ENCODE measurements at regions of chr7 and their contacts with region 1.

Region 1: GRCh38 chr7:92447345-92448204 is at the start of gene GATAD1:
- ATAC-seq: peak; percentile 92 to 98 (median 97)
- H3K4me3 ChIP-seq: peak within 1 kb of the TSS; percentile 65 to 99 (median 97)
- H3K27ac ChIP-seq: peak within 1 kb of the TSS; percentile 93 to 95
- H3K4me1 ChIP-seq: peaks cover 3 to 10% of the 10 kb centered on the region in 2 donors
- total RNA-seq, gene GATAD1: 20.5 to 44.2 (median 32.8) TPM

Region 2: GRCh38 chr7:92025260-92025659 is 422.3 kb before region 1 on chr7:
- in situ Hi-C with region 1: no loop called
- ATAC-seq: peak in 2 of 8 experiments; percentile 69 to 71
- H3K4me3 ChIP-seq: no peak overlapping the region
- H3K27ac ChIP-seq: no peak overlapping the region
- H3K4me1 ChIP-seq: no peaks in the 10 kb centered on the region

Region 3: GRCh38 chr7:92245487-92246362 is 201.8 kb before region 1 on chr7 and contains the starts of genes ANKIB1 and KRIT1:
- in situ Hi-C with region 1: loop called in 1 of 9 experiments (anchors 25 kb)
- ATAC-seq: peak; percentile 81 to 92 (median 88)
- H3K4me3 ChIP-seq: peak within 1 kb of the TSS; percentile 58 to 96 (median 86)
- H3K27ac ChIP-seq: peak within 1 kb of the TSS; percentile 84 to 99
- H3K4me1 ChIP-seq: peaks cover 6 to 13% of the 10 kb centered on the region in 2 donors
- total RNA-seq, gene ANKIB1: 28.7 to 96.9 (median 49.8) TPM
- total RNA-seq, gene KRIT1: 26.7 to 75.1 (median 35.5) TPM

Measured in motor neuron (in vitro differentiated cells).